Motor neuron (in vitro differentiated cells): ENCODE measurements at regions of chr9 and their contacts with region 1.

Region 1: GRCh38 chr9:125374443-125375309 is 113.0 kb downstream of the GAPVD1 start:
- ATAC-seq: peak; percentile 68 to 92 (median 86)
- H3K4me3 ChIP-seq: peak overlapping the region in 4 of 5 donors; percentile 0 to 24 (median 16)
- H3K27ac ChIP-seq: no peak overlapping the region
- H3K4me1 ChIP-seq: peaks cover 20 to 24% of the 10 kb centered on the region in 2 donors

Region 2: GRCh38 chr9:124906966-124907365 is 467.7 kb before region 1 on chr9:
- in situ Hi-C with region 1: loop called in 1 of 9 experiments (anchors 25 kb)
- ATAC-seq: no peak
- H3K4me3 ChIP-seq: no peak overlapping the region
- H3K27ac ChIP-seq: no peak overlapping the region
- H3K4me1 ChIP-seq: peaks cover 0 to 5% of the 10 kb centered on the region in 2 donors